Esophagus squamous epithelium (tissue), 5 donors: ENCODE measurements at regions of chr10 and their contacts with region 1.

Region 1: DNA sequence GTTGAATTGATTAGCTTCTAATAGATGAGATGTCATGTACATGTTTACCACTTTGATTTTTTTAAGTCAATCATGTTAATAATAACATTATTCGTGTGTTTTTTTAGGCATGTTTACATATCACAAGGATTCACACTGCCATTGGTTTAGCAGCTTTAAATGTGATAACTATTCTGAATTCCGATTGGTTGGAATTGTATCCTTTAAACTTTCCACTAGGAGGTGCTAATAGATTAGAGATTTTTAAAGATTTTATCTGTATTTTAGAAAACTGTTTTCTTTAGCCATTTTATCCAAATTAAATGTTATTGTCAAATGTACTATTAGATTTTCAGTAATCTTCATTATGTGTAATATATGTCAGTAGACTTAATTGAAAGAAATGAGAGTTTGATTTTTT is 83.2 kb downstream of the HECTD2 start:
- DNase-seq: no peak
- H3K4me3 ChIP-seq: no peak overlapping the region
- H3K27ac ChIP-seq: no peak overlapping the region
- H3K4me1 ChIP-seq: no peaks in the 10 kb centered on the region
- H3K27me3 ChIP-seq: no peaks in the 10 kb centered on the region
- CTCF ChIP-seq: peak in 5 of 6 experiments; percentile 42 to 73 (median 46)
- POLR2A ChIP-seq: no peak

Region 2: GRCh38 chr10:91389636-91390512 is 103.4 kb before region 1 on chr10:
- intact Hi-C with region 1: loop called (anchors 10 kb)
- DNase-seq: no peak
- H3K4me3 ChIP-seq: peak overlapping the region in 1 of 4 donors; percentile 34
- H3K27ac ChIP-seq: no peak overlapping the region
- H3K4me1 ChIP-seq: peaks cover 0 to 10% (median 6%) of the 10 kb centered on the region in 3 donors
- H3K27me3 ChIP-seq: no peaks in the 10 kb centered on the region
- CTCF ChIP-seq: peak in 5 of 6 experiments; percentile 47 to 72 (median 71)
- POLR2A ChIP-seq: no peak